ENCODE measurements at regions of chr10 and their contacts with region 1.

Region 1: DNA sequence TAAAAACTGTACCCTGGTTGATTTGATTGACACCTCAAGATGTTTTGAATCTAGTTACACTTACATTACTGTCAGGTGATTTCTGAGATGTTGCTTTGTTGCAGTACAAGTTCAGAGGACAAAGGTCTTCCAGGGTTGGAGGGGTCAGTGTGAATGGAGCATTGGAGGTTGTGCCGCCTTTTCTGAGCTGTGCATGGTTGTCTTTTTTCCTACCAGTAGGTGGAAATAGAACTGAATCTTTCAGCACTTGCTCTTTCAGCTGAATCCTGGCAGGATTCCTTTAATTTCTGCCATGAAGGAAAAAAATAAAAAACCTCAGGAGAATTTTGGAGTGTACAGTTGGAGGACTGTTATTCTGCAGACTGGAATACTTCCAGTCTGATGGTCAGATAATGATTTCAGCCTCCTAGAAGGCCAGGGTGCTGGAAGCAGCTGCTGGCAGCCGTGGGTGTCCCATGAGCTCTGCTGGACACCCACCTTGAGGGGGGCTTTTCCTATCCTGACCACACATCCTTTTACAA is 82.7 kb downstream of the PLCE1 start:
- DNase-seq: no peak
- ATAC-seq: peak; percentile 33 to 86 (median 82)
- H3K4me3 ChIP-seq: no peak overlapping the region
- H3K27ac ChIP-seq: peak overlapping the region in 6 of 12 donors; percentile 9 to 65 (median 36)
- H3K4me1 ChIP-seq: peaks cover 0 to 26% (median 19%) of the 10 kb centered on the region in 12 donors
- H3K27me3 ChIP-seq: no peaks in the 10 kb centered on the region
- CTCF ChIP-seq: peak; percentile 26 to 64 (median 48)
- POLR2A ChIP-seq: no peak

Region 2: GRCh38 chr10:93859049-93859655 is 217.2 kb before region 1 on chr10:
- intact Hi-C with region 1: no loop called
- DNase-seq: no peak
- ATAC-seq: no peak
- H3K4me3 ChIP-seq: no peak overlapping the region
- H3K27ac ChIP-seq: no peak overlapping the region
- H3K4me1 ChIP-seq: no peaks in the 10 kb centered on the region
- H3K27me3 ChIP-seq: peaks cover 0 to 3% (median 0%) of the 10 kb centered on the region in 9 donors
- CTCF ChIP-seq: peak in 8 of 12 donors; percentile 13 to 40 (median 24)
- POLR2A ChIP-seq: no peak

Region 3: DNA sequence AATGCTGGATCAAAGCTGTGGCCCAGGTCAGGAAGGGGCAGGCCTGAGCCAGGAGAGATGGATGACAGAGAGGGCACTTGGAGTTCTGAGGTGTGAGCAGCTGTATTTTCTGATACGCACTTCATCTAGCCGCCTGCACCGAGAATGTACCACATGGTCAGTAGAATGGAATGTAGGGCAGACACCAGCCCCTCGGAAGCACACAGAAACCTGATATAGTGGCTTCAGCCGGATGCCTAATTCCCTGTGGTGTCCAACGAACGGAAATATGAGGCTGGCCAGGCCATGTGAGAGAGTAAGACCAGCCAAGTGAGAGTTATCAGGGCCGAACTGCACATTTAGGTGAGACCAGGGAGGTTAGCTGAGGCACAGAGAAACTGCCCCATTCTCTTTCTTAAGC is 129.3 kb before region 1 on chr10:
- intact Hi-C with region 1: loop called in 1 of 10 experiments (anchors 10 kb)
- DNase-seq: peak in 4 of 5 donors; percentile 46 to 78 (median 72)
- ATAC-seq: peak; percentile 91 to 97 (median 92)
- H3K4me3 ChIP-seq: no peak overlapping the region
- H3K27ac ChIP-seq: peak overlapping the region in 11 of 12 donors; percentile 10 to 94 (median 59)
- H3K4me1 ChIP-seq: peaks cover 0 to 41% (median 11%) of the 10 kb centered on the region in 12 donors
- H3K27me3 ChIP-seq: no peaks in the 10 kb centered on the region
- CTCF ChIP-seq: no peak
- POLR2A ChIP-seq: no peak

Region 4: DNA sequence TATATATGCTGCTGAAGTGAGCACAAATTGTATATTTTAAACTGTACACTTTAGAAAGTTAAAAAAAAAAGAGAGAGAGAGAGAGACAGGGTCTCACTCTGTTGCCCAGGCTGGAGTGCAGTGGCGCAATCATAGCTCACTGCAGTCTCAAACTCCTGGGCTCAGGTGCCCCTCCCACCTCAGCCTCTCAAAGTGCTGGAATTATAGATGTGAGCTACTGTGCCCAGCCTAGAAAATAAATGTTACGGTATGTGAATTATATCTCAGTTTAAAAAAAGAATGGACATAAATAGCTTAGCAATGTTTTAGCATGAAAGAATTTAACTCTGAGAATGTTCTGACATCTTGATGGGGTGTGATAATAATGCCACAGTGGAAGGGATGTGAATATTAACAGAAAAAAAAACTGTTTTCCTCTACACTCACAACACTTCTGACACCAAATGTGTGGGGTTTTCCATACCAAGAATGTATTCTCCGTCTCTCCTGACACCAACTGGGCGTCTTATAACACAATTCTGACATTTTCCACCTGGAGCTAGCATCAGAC is 79.4 kb after region 1 on chr10:
- intact Hi-C with region 1: no loop called
- DNase-seq: no peak
- ATAC-seq: peak; percentile 26 to 66 (median 38)
- H3K4me3 ChIP-seq: no peak overlapping the region
- H3K27ac ChIP-seq: peak overlapping the region in 5 of 12 donors; percentile 14 to 53 (median 49)
- H3K4me1 ChIP-seq: peaks cover 0 to 19% (median 4%) of the 10 kb centered on the region in 12 donors
- H3K27me3 ChIP-seq: no peaks in the 10 kb centered on the region
- CTCF ChIP-seq: no peak
- POLR2A ChIP-seq: no peak

Region 5: DNA sequence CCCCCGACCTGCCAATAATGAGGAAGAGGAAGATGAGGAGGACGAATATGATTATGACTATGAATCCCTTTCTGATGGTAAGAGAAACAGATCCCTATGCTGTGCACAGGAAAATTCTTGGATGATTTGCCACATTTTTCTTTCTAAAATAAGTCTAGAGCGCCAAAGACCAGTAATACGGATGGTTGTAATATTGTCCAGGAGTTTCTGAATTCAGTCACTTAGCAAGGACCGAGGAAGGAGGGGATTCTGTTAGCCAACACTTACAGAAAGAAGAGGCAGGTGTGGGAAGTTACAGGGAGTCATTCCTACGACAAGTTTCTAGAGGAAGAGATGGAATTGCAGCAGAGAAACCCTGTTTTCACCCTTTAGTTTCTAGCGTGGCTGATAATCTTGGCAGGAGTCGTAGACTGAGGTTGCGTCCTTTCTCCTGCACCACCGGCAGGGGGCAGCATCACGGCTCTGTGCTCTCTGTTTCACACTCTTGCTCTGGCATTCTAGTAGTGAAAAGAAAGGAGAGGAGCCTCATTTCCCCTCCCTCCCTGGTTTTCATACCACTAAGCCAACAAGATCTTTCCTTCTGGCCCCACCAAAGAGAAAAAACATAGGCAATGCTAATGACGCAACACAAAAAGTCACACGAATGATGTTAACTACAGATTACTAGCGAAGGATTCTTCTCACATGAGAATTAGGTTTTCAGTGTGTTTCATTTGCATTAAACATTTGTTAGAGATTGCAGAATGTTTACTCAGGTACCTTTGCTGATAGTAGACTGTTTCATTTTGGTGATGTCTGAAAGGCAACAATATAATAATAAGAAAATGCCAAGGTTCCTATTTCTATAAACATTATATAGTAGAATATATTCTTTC is 203.7 kb after region 1 on chr10:
- intact Hi-C with region 1: loop called in 1 of 10 experiments (anchors 5 kb)
- DNase-seq: peak in 4 of 5 donors; percentile 36 to 74 (median 54)
- ATAC-seq: peak; percentile 59 to 76 (median 72)
- H3K4me3 ChIP-seq: no peak overlapping the region
- H3K27ac ChIP-seq: no peak overlapping the region
- H3K4me1 ChIP-seq: peaks cover 0 to 22% (median 7%) of the 10 kb centered on the region in 12 donors
- H3K27me3 ChIP-seq: no peaks in the 10 kb centered on the region
- CTCF ChIP-seq: peak; percentile 74 to 94 (median 88)
- POLR2A ChIP-seq: no peak

Region 6: DNA sequence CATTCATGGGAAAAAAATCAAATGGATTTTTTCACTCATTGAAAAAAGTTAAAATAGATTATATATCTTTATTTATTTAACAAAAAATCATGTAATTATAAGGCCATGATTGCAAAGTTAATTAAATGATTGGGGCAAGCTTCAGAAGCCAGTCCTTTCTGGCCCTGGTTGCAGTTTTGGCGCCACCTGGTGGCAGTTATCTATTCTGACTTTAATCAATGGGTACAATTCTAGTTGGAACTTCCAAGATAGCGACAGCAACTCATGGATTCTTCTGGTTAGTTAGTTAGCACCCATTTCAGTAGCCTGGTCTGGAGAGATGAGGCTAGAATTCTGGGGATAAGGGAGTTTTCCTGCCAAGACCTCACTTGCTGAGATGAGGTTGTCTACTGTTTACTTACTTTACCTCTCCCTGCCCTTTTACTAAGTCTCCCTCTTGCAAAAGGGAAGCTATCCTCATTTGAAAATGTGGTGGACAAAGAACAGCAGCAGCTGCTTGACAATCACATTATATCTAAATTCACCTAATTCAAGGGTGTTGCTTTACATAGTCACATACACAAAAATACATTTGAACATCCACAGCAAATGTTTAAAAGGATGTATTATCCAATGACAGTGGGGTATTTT is 244.0 kb after region 1 on chr10:
- intact Hi-C with region 1: loop called in 8 of 10 experiments (anchors 2 to 10 kb)
- DNase-seq: peak; percentile 57 to 73 (median 69)
- ATAC-seq: peak in 3 of 4 donors; percentile 43 to 63 (median 51)
- H3K4me3 ChIP-seq: no peak overlapping the region
- H3K27ac ChIP-seq: no peak overlapping the region
- H3K4me1 ChIP-seq: peaks cover 0 to 13% (median 0%) of the 10 kb centered on the region in 12 donors
- H3K27me3 ChIP-seq: no peaks in the 10 kb centered on the region
- CTCF ChIP-seq: peak; percentile 81 to 94 (median 88)
- POLR2A ChIP-seq: no peak